ENCODE measurements at regions of chr12 and their contacts with region 1.

Region 1: GRCh38 chr12:6165395-6165794 is 34.8 kb upstream of the CD9 start:
- DNase-seq: no peak
- ATAC-seq: no peak
- H3K4me3 ChIP-seq: no peak overlapping the region
- H3K27ac ChIP-seq: no peak overlapping the region
- H3K4me1 ChIP-seq: peaks cover 6% of the 10 kb centered on the region
- H3K27me3 ChIP-seq: no peaks in the 10 kb centered on the region
- CTCF ChIP-seq: no peak

Region 2: DNA sequence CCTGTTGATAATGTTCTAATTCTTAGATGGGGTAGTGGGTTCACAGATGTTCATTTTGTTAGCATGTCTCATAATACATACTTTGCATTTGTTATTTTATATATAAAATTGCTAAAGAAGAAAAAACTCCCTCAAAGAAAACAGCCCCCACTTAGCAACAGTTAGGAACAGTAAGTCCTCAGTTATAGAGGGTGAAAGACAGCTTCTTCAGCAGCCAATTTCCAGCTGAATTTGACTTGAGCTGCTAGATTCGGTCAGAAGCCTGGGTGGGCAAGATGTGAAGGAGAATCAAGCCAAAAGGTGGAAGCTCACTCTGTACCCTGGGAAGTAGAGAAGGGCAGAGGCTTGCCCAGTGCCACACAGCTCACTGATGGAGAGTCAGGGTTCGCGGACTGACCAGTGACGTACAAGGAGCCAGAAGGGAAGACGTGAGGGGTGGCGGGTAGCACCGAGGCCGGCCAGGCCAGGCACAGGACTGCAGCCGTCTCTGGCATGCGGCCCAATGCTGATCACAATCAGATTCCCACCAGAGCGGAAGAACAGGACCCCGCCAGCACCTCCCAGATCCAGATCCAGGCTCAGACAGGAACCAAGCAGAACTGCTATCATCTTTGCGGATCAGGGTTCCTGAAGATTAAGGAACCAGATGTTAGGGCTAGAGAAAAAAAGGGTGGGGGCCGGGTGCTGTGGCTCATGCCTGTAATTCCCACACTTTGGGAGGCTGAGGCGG is 10.5 kb before region 1 on chr12:
- CTCF ChIA-PET with region 1: no interaction called
- POLR2A ChIA-PET with region 1: interaction called, 14 read pairs
- in situ Hi-C with region 1: no loop called
- intact Hi-C with region 1: no loop called
- DNase-seq: no peak
- ATAC-seq: no peak
- H3K4me3 ChIP-seq: no peak overlapping the region
- H3K27ac ChIP-seq: no peak overlapping the region
- H3K4me1 ChIP-seq: no peaks in the 10 kb centered on the region
- H3K27me3 ChIP-seq: no peaks in the 10 kb centered on the region
- CTCF ChIP-seq: no peak

Region 3: GRCh38 chr12:6226002-6226678 is 60.7 kb after region 1 on chr12:
- CTCF ChIA-PET with region 1: no interaction called
- POLR2A ChIA-PET with region 1: no interaction called
- in situ Hi-C with region 1: no loop called
- intact Hi-C with region 1: no loop called
- DNase-seq: no peak
- ATAC-seq: no peak
- H3K4me3 ChIP-seq: no peak overlapping the region
- H3K27ac ChIP-seq: no peak overlapping the region
- H3K4me1 ChIP-seq: no peaks in the 10 kb centered on the region
- H3K27me3 ChIP-seq: no peaks in the 10 kb centered on the region
- CTCF ChIP-seq: no peak